PC-3 (cell line): ENCODE measurements at regions of chr5 and their contacts with region 1.

Region 1: DNA sequence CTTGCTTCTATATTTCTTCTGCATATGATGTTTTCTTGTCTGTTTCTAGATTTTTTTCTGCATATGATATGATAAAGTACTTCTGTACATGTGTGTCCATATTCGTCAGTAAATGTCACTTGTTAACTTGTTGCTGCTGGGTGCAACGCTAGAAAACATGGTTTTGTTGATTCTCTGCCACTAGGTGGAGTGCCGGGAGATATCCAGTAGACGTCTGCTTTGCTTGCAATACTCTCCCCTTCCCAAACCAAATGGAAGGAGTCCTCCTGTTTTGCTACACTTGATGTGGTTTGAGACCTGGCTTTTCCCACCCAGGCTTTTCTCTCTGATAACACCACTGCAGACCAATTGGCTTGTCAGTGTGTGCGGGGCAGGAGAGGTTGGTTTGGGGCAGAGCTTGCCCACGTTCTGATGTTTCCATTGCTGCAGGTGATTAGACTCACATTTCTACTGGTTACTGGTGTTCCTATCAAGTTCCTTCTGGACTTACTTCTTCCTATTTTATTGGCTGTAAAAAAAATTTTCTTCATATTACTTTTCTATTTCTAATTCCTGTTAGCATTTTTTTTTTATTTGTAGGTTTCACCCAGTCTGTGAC is 900.0 kb upstream of the CDH10 start:
- DNase-seq: peak; percentile 80
- ATAC-seq: peak; percentile 68
- H3K4me3 ChIP-seq: no peak overlapping the region
- H3K27ac ChIP-seq: no peak overlapping the region
- H3K4me1 ChIP-seq: peaks cover 17% of the 10 kb centered on the region
- H3K27me3 ChIP-seq: no peaks in the 10 kb centered on the region
- CTCF ChIP-seq: peak; percentile 90

Region 2: DNA sequence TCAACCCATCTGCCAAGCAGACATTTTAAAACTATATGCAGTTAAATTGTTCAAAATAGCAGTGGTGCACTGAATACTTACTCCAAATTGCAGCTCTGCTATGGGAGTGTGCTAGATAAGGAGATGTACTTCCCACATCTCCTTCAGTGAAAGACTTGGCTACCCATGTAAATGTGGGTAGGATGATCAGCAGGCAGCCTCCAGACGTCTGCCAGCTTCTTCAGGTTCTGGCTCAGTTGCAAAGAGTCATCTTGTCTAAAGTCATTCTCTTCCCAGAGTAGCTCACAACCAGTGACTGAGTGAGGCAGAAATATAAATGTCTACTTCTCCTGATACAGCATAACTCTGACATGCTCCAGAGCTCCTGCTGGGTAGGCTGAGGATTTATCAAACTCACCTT is 150.1 kb after region 1 on chr5:
- CTCF ChIA-PET with region 1: no interaction called
- POLR2A ChIA-PET with region 1: no interaction called
- intact Hi-C with region 1: no loop called
- DNase-seq: no peak
- ATAC-seq: no peak
- H3K4me3 ChIP-seq: no peak overlapping the region
- H3K27ac ChIP-seq: no peak overlapping the region
- H3K4me1 ChIP-seq: no peaks in the 10 kb centered on the region
- H3K27me3 ChIP-seq: no peaks in the 10 kb centered on the region
- CTCF ChIP-seq: no peak

Region 3: DNA sequence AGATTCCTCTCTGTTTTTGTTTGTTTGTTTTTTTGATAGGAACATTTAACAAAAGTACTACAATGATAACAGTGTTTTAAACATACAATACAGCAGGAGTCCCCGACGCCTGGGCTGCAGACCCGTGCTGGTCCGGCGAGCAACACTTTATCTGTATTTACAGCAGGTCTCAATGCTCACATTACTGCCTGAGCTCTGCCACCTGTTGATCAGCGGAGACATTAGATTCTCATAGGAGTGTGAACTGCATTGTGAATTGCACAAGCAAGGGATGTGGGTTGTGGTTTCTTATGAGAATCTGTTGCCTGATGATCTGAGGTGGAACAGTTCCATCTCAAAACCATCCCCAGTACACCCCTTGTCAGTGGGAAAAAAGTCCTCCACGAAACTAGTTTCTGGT is 168.5 kb after region 1 on chr5:
- CTCF ChIA-PET with region 1: no interaction called
- POLR2A ChIA-PET with region 1: no interaction called
- intact Hi-C with region 1: loop called (anchors 10 kb)
- DNase-seq: peak; percentile 34
- ATAC-seq: peak; percentile 59
- H3K4me3 ChIP-seq: no peak overlapping the region
- H3K27ac ChIP-seq: no peak overlapping the region
- H3K4me1 ChIP-seq: peaks cover 13% of the 10 kb centered on the region
- H3K27me3 ChIP-seq: no peaks in the 10 kb centered on the region
- CTCF ChIP-seq: 0 out of 2 replicates have a peak, but pooled peaks have one; percentile 29

Region 4: GRCh38 chr5:26009742-26010141 is 465.0 kb after region 1 on chr5:
- CTCF ChIA-PET with region 1: no interaction called
- POLR2A ChIA-PET with region 1: no interaction called
- intact Hi-C with region 1: loop called (anchors 5 kb)
- DNase-seq: peak; percentile 52
- ATAC-seq: peak; percentile 81
- H3K4me3 ChIP-seq: peak overlapping the region; percentile 40; the same call in 1 of the 2 replicates
- H3K27ac ChIP-seq: no peak overlapping the region
- H3K4me1 ChIP-seq: no peaks in the 10 kb centered on the region
- H3K27me3 ChIP-seq: no peaks in the 10 kb centered on the region
- CTCF ChIP-seq: peak; percentile 77

Region 5: GRCh38 chr5:26482810-26483375 is 938.1 kb after region 1 on chr5:
- CTCF ChIA-PET with region 1: no interaction called
- POLR2A ChIA-PET with region 1: no interaction called
- intact Hi-C with region 1: loop called (anchors 10 kb)
- DNase-seq: peak; percentile 71
- ATAC-seq: peak; percentile 100
- H3K4me3 ChIP-seq: peak overlapping the region; percentile 67
- H3K27ac ChIP-seq: no peak overlapping the region
- H3K4me1 ChIP-seq: no peaks in the 10 kb centered on the region
- H3K27me3 ChIP-seq: no peaks in the 10 kb centered on the region
- CTCF ChIP-seq: peak; percentile 90